Mucosa of descending colon (tissue), 3 donors: ENCODE measurements at regions of chr10 and their contacts with region 1.

Region 1: DNA sequence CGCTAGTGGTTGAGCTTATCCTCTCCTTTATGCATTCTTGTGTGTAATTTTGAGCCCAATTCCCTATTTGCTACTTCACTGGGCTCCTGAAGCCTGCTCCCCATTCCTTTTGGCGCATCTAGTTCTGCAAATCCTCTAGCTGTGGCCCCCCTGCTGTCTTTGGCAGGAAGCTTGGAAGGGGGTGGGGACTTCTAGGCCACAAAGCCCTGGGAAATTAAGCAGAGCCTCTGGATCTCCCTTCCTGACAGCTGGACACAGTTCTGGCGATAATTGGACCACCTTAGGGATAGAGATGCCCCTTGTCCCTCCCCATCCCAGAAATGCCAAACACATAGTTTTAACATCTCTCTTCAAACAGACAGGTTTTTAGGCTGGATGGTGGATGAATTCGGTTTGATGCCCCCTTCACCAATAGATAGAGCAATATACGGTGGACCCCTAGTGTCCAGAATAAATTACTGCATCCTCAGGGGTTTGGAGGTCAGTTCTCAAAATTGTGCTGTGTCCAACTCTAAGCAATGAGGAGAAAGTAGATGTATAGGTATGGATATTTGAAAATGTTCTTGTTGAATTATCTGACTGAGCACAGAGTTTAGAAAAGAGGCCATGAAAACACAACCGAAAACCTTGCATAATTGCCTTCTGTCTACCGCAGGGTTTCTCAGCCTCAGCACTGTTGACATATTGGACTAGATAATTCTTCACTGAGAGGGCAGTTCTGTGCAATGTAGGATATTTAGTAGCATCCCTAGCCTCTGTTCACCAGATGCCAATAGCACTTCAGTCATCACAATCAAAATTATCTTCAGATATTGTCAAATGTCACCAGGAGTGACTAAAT is 75.5 kb downstream of the PAPSS2 start:
- DNase-seq: peak in 1 of 3 donors; percentile 19
- ATAC-seq: peak; percentile 72
- H3K4me3 ChIP-seq: no peak overlapping the region
- H3K4me1 ChIP-seq: no peaks in the 10 kb centered on the region
- CTCF ChIP-seq: peak; percentile 28

Region 2: DNA sequence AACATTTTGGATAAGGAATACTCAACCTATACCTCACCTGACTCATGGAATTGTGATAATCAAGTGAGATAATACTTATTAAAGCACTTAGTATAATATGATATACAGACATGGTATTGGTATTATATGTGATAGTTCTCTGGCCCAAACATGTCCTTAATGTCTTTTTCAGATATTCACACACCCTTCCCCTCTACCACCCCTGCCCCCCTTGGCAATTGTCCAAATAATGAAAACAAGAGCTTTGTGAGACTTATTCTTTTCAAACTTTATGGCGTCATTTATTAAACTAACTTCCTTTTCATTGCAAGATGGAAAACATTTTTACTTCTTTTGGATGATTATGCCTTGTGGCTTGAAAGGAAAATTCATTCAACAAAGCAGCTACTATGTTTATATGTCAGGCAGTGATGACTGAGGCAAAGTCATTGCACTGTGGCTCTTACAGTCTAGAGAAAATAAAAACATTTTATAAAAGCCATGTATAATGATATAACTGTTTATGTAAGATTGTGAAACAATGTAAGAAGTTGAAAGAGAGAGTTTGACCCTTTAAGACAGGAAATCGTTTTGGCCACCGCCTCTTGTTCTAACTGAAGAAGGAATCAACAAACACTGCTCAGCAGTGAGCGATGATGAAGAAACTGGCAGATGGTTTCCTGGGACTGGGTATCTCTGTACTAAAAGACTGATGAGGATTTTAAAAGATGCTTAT is 203.1 kb before region 1 on chr10:
- intact Hi-C with region 1: loop called in 1 of 2 experiments (anchors 10 kb)
- DNase-seq: peak in 1 of 3 donors; percentile 20
- ATAC-seq: peak; percentile 49
- H3K4me3 ChIP-seq: no peak overlapping the region
- H3K4me1 ChIP-seq: no peaks in the 10 kb centered on the region
- CTCF ChIP-seq: no peak

Region 3: DNA sequence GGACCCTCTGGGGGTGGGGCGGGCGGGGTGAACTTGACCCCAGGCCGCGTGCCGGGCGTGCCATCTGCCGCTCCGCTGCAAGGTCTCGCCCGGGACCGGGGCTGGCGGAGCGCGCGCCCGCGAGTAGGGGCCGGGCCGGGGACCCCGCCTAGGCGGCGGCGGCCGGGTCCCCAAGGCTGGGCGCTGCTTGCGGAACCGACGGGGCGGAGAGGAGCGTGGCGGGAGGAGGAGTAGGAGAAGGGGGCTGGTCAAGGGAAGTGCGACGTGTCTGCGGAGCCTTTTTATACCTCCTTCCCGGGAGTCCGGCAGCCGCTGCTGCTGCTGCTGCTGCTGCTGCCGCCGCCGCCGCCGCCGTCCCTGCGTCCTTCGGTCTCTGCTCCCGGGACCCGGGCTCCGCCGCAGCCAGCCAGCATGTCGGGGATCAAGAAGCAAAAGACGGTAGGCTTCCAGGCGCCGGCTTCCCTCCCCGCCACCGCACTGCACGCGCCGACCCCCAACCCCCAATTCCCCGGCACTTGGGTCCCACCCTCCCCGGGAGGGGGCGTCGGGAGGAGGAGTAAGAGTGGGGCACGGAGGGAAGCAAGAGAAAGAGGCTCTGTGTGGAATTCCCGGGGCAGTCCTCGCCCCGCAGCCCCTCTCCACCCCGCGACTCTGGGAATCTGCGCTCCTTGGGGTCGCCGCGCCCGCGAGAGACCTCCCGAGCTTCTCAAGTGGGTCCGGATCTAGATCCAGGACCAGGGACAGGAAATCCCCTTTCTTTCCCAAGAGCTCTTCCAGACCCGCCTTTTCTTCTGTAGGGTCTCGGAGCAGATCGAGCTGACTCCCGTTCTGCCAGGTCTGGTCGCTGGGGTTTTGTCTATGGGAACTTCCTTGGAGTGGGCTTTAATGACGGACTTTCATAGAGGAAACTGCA is 75.4 kb before region 1 on chr10 and contains the start of gene PAPSS2:
- intact Hi-C with region 1: loop called (anchors 5 to 10 kb)
- DNase-seq: peak; percentile 65 to 83 (median 83)
- ATAC-seq: peak; percentile 86
- H3K4me3 ChIP-seq: peak within 1 kb of the TSS; percentile 70
- H3K4me1 ChIP-seq: peaks cover 3% of the 10 kb centered on the region
- CTCF ChIP-seq: no peak
- total RNA-seq, gene PAPSS2: 123 to 399 (median 147) TPM